Panc1 (cell line): ENCODE measurements at regions of chr5 and their contacts with region 1.

Region 1: DNA sequence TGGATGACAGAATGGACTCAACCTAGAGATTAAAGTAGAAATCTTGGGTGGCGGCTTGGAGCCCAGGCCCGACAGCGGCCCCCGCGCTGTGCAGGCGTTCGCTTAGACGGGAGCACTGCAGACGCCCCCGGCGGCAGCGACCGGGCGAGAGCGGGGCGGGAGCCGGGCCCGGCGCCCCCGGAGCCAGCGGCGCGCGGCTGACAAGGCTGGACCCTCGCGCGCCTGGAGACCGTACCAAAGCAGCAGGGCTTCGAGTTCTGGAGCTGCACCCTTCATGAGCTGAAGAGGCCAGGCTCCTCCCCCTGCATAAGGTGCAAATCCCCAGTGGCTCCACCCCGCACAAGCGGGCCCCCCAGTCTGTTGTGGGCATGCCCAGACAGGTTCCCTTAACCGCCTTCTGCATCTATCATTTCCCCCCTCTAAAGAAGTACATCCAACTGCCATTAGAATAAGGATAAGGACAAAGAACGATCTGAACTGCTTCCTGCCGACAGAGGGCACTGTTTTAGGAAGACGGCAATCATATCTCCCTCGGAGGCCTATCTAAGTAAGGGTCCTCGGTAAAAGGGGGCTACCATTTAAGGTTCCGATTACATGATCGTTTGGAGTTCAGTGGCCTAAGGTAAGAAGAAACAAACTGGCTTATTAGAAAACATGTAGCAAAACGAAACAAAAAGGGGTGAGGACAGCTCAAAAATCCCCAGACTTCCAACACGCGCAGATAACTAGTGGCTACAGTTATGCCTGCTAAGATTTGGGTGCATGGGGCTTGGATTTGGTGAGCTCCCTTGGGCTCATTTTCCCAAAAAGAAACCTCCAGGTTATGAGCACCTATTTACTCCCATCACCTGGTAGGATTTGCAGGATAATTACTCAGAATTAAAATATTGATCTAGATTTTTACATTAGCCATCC is 66.3 kb downstream of the RGMB start:
- DNase-seq: peak; percentile 8
- ATAC-seq: peak; percentile 87
- H3K4me3 ChIP-seq: peak overlapping the region; percentile 8 to 31; a peak in 3 of 4 replicates
- H3K27ac ChIP-seq: no peak overlapping the region
- H3K4me1 ChIP-seq: no peaks in the 10 kb centered on the region
- H3K27me3 ChIP-seq: no peaks in the 10 kb centered on the region
- CTCF ChIP-seq: peak; percentile 80

Region 2: GRCh38 chr5:98510143-98510985 is 329.4 kb before region 1 on chr5:
- CTCF ChIA-PET with region 1: no interaction called
- POLR2A ChIA-PET with region 1: no interaction called
- in situ Hi-C with region 1: no loop called
- intact Hi-C with region 1: no loop called
- DNase-seq: no peak
- ATAC-seq: peak; percentile 74
- H3K4me3 ChIP-seq: no peak overlapping the region
- H3K27ac ChIP-seq: no peak overlapping the region
- H3K4me1 ChIP-seq: no peaks in the 10 kb centered on the region
- H3K27me3 ChIP-seq: no peaks in the 10 kb centered on the region
- CTCF ChIP-seq: no peak

Region 3: GRCh38 chr5:98556712-98557111 is 283.0 kb before region 1 on chr5:
- CTCF ChIA-PET with region 1: no interaction called
- POLR2A ChIA-PET with region 1: no interaction called
- in situ Hi-C with region 1: no loop called
- intact Hi-C with region 1: no loop called
- DNase-seq: no peak
- ATAC-seq: no peak
- H3K4me3 ChIP-seq: no peak overlapping the region
- H3K27ac ChIP-seq: no peak overlapping the region
- H3K4me1 ChIP-seq: no peaks in the 10 kb centered on the region
- H3K27me3 ChIP-seq: no peaks in the 10 kb centered on the region
- CTCF ChIP-seq: no peak

Region 4: GRCh38 chr5:98787131-98787719 is 52.5 kb before region 1 on chr5:
- CTCF ChIA-PET with region 1: no interaction called
- POLR2A ChIA-PET with region 1: interaction called, 16 read pairs
- in situ Hi-C with region 1: no loop called
- intact Hi-C with region 1: no loop called
- DNase-seq: no peak
- ATAC-seq: peak; percentile 44; the same call in 1 of the 2 replicates
- H3K4me3 ChIP-seq: no peak overlapping the region
- H3K27ac ChIP-seq: no peak overlapping the region
- H3K4me1 ChIP-seq: peaks cover 5% of the 10 kb centered on the region; the same call in 1 of the 2 replicates
- H3K27me3 ChIP-seq: no peaks in the 10 kb centered on the region
- CTCF ChIP-seq: no peak

Region 5: GRCh38 chr5:98905857-98906690 is 66.3 kb after region 1 on chr5:
- CTCF ChIA-PET with region 1: no interaction called
- POLR2A ChIA-PET with region 1: no interaction called
- in situ Hi-C with region 1: no loop called
- intact Hi-C with region 1: no loop called
- DNase-seq: no peak
- ATAC-seq: no peak; the same call in 1 of the 2 replicates
- H3K4me3 ChIP-seq: no peak overlapping the region
- H3K27ac ChIP-seq: no peak overlapping the region
- H3K4me1 ChIP-seq: peaks cover 9% of the 10 kb centered on the region
- H3K27me3 ChIP-seq: no peaks in the 10 kb centered on the region
- CTCF ChIP-seq: peak; percentile 66; the same call in 1 of the 2 replicates